MCF 10A (cell line): ENCODE measurements at regions of chr17 and their contacts with region 1.

Region 1: DNA sequence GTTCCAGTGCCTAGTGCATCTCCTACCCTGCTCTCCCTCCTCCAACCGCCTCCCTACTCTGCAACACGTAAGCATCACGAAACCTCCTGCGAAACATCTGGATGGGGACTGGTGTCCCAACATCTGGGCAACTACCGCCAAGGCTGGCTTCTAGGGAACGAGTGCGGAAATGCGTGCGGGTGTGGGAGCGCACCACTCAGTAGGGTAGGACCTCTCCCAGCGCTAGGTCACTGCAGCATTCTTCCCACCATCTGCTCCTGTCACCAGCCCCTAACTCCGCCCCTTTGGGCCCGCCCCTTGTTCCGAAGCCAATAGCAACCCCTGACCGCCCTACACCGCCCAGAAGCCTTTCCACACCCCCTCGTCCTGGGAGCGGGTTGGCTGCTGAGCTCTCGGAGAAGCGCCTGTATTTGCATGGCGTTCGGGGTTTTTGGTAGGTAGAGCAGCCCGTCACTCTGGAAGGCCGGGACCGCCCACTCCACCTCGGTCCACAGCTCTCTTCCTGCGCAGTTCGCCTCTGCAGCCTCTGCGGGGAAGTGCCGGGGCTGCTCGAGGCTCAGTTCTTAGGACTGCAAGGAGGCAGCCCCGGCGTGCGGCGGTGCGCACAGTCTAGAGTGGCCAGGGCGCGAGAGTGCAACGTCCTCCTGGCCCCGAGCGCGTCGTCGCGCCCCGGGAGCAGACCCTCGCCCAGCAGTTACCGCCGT is at the start of gene HS3ST3B1:
- DNase-seq: peak; percentile 99
- H3K4me3 Mint-ChIP-seq: peak within 1 kb of the TSS; percentile 90
- H3K27ac Mint-ChIP-seq: peak within 1 kb of the TSS; percentile 81
- H3K4me1 Mint-ChIP-seq: peaks cover 13% of the 10 kb centered on the region
- H3K27me3 Mint-ChIP-seq: peaks cover 12% of the 10 kb centered on the region
- CTCF ChIP-seq: no peak
- total RNA-seq, gene HS3ST3B1: 3.4 and 3.8 TPM in 2 replicates

Region 2: DNA sequence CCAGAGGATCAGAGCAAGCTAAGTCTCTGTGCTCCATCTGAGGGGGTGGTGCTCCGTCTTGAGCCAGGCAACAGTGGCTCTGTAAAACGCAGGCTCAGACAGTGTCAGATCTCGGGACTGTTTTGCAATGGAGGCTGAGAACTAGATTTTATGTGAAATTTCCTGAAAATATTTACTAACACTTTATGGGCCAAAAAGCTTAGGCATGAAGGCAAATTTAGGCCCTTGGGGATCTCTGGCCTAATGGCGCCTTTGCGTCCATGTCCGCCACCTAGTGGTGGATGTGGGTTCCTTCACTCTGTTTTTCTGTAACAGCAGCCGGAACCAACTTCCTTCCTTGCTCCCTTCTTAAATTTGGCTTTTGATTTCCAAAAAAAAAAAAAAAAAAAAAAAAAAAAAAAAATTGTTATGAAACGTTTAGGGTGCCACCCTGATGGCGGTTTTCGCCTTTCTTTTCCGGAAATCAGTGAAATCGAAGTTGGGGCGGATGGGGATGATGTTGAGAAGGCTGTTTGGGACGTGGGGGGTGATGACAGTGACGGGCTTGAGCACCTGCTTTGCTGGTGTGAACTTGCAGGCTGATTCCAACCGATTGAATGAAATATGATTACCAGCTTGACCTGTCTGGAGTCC is 1268.9 kb before region 1 on chr17:
- CTCF ChIA-PET with region 1: interaction called, 14 read pairs
- POLR2A ChIA-PET with region 1: no interaction called
- intact Hi-C with region 1: loop called (anchors 5 kb)
- DNase-seq: peak; percentile 57
- H3K4me3 Mint-ChIP-seq: no peak overlapping the region
- H3K27ac Mint-ChIP-seq: no peak overlapping the region
- H3K4me1 Mint-ChIP-seq: peaks cover 5% of the 10 kb centered on the region
- H3K27me3 Mint-ChIP-seq: peaks cover 37% of the 10 kb centered on the region
- CTCF ChIP-seq: peak; percentile 65

Region 3: GRCh38 chr17:13337864-13338371 is 962.8 kb before region 1 on chr17:
- CTCF ChIA-PET with region 1: interaction called, 12 read pairs
- POLR2A ChIA-PET with region 1: interaction called, 8 read pairs
- intact Hi-C with region 1: loop called (anchors 1 kb)
- DNase-seq: peak; percentile 77
- H3K4me3 Mint-ChIP-seq: peak overlapping the region; percentile 66
- H3K27ac Mint-ChIP-seq: peak overlapping the region; percentile 23
- H3K4me1 Mint-ChIP-seq: no peaks in the 10 kb centered on the region
- H3K27me3 Mint-ChIP-seq: no peaks in the 10 kb centered on the region
- CTCF ChIP-seq: peak; percentile 79

Region 4: DNA sequence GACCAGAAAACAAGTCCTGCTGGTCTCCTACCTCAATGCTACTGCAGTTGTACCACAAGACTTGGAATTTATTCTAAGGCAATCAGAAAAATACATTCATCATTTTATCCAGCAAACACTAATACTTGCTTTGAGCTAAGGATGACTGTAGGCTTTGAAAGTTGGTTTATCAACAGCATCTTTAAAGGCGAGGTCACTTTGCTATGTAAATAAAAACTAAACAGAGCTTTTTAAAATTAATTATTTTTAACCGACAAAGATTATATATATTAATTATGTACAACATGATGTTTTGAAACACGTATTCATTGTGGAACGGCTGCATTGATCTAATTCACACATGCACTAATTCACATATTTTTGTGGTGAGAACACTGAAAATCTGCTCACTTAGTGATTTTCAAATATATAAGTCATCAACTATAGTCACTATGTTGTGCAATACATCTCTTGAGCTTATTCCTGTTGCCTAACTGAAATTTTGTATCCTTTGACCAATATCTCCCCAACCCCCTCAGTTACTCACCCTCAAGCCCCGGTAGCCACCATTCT is 573.1 kb before region 1 on chr17:
- CTCF ChIA-PET with region 1: interaction called, 3 read pairs
- POLR2A ChIA-PET with region 1: interaction called, 3 read pairs
- intact Hi-C with region 1: loop called (anchors 5 kb)
- DNase-seq: peak; percentile 75
- H3K4me3 Mint-ChIP-seq: no peak overlapping the region
- H3K27ac Mint-ChIP-seq: peak overlapping the region; percentile 68
- H3K4me1 Mint-ChIP-seq: peaks cover 27% of the 10 kb centered on the region
- H3K27me3 Mint-ChIP-seq: no peaks in the 10 kb centered on the region
- CTCF ChIP-seq: no peak

Region 5: DNA sequence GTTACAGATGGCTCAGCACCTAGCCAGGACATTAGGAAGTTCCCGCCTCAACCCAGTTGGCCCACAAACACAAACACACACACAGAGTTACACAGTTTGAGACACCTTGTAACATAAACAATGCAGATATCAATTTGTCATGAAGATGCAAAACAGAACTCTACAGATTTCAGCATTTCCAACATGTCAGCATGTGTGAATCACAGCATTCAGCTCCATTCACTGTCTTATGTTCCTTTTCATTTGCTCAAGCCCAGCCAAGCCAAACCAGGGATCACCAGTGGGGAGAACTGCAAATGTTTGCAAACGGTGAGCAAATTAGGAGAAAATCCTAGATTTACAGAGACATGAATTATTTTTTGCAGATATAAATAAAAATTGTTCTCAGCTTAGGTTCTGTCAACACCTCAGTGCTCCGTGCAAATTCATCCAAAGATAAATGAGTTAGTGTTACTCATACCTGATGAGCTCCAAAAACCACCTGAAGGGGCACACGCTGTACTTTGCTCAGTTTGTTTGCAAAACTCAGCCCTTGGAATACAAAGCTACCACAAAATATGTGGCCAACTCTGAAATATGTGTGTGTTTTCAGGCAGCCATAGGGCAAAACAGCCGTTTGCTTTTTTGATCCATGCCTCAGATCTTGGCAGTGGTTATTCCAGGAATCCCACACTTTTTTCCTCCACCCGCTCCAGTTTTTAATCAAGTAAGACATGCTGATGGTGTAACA is 247.7 kb before region 1 on chr17:
- CTCF ChIA-PET with region 1: interaction called, 8 read pairs
- POLR2A ChIA-PET with region 1: interaction called, 28 read pairs
- intact Hi-C with region 1: no loop called
- DNase-seq: peak; percentile 60
- H3K4me3 Mint-ChIP-seq: peak overlapping the region; percentile 44
- H3K27ac Mint-ChIP-seq: peak overlapping the region; percentile 76
- H3K4me1 Mint-ChIP-seq: peaks cover 13% of the 10 kb centered on the region
- H3K27me3 Mint-ChIP-seq: no peaks in the 10 kb centered on the region
- CTCF ChIP-seq: no peak

Region 6: DNA sequence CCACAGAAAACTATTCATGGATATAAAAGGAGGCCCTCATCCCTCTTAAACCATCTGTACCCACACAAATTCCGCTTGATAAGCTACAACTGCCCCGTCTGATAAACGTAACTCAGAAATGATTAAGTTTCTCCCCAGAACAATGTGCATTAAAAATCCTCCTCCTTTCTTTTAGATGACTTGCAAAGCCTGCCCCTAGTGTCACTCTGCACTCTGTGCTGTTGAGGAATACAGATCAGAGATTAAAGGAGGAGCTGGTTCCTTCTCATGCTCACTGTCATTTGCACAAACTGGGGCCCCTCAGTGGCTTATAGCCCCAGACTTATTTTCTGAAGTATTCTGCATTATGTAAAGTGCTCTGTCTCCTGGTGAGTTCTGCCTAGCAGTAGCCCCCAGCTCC is 97.3 kb before region 1 on chr17:
- CTCF ChIA-PET with region 1: interaction called, 9 read pairs
- POLR2A ChIA-PET with region 1: interaction called, 5 read pairs
- intact Hi-C with region 1: loop called (anchors 5 kb)
- DNase-seq: no peak
- H3K4me3 Mint-ChIP-seq: no peak overlapping the region
- H3K27ac Mint-ChIP-seq: no peak overlapping the region
- H3K4me1 Mint-ChIP-seq: peaks cover 34% of the 10 kb centered on the region
- H3K27me3 Mint-ChIP-seq: no peaks in the 10 kb centered on the region
- CTCF ChIP-seq: no peak

Region 7: DNA sequence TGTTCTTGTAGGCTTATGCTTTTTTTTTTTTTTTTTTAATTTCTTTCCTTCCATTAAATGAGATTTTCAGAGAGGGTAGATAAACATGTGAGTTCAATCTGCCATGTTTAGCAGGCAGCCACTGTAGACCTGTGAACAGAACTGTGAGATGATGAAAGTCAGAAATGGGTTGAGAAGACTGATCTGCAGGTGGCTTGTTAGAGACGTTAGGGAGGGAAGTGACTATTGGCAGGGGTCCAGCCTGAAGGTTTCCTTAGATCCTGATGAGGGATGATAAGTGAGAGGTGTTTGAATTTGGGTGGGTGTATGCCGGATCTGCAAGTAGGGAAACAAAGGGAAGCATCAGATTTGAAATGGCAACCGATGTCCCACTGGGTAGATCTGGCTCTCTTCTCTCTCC is 158.0 kb after region 1 on chr17:
- CTCF ChIA-PET with region 1: no interaction called
- POLR2A ChIA-PET with region 1: no interaction called
- intact Hi-C with region 1: no loop called
- DNase-seq: no peak
- H3K4me3 Mint-ChIP-seq: no peak overlapping the region
- H3K27ac Mint-ChIP-seq: no peak overlapping the region
- H3K4me1 Mint-ChIP-seq: no peaks in the 10 kb centered on the region
- H3K27me3 Mint-ChIP-seq: no peaks in the 10 kb centered on the region
- CTCF ChIP-seq: no peak

Region 8: DNA sequence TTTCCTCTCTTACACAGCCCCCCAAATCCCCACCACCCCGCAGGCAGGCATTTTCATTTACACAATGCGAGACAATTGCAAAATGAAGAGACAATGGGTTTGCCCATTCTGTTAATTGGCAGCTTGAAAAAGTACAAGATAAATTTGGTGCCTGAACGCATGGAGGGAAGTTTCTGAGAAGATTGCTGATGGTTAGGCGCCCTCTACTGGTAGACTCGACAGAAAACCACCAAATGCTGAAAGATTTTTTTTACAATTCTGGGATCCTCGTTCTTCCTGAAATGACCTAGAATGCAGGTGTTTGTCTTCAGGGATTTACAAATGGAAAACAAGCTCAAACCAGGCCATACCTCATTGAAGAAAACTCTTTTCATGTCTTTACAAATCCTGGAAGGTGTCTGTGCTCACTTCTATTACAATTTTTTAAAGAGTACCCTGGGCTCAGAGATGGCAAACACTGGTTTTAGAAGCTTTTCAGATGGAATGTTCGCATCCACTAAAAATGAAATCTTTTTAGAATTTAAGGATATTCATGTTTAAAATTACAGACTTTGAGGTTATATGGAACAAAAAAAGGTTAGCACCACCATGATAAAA is 625.9 kb after region 1 on chr17:
- CTCF ChIA-PET with region 1: interaction called, 12 read pairs
- POLR2A ChIA-PET with region 1: interaction called, 12 read pairs
- intact Hi-C with region 1: loop called (anchors 1 kb)
- DNase-seq: peak; percentile 83
- H3K4me3 Mint-ChIP-seq: no peak overlapping the region
- H3K27ac Mint-ChIP-seq: no peak overlapping the region
- H3K4me1 Mint-ChIP-seq: no peaks in the 10 kb centered on the region
- H3K27me3 Mint-ChIP-seq: peaks cover 14% of the 10 kb centered on the region
- CTCF ChIP-seq: peak; percentile 80